Mucosa of descending colon (tissue), 3 donors: ENCODE measurements at regions of chr11 and their contacts with region 1.

Region 1: GRCh38 chr11:62444236-62444833 is 25.5 kb downstream of the SCGB1A1 start:
- DNase-seq: peak; percentile 47 to 71 (median 71)
- ATAC-seq: peak; percentile 33
- H3K4me3 ChIP-seq: no peak overlapping the region
- H3K4me1 ChIP-seq: peaks cover 23% of the 10 kb centered on the region
- CTCF ChIP-seq: no peak

Region 2: DNA sequence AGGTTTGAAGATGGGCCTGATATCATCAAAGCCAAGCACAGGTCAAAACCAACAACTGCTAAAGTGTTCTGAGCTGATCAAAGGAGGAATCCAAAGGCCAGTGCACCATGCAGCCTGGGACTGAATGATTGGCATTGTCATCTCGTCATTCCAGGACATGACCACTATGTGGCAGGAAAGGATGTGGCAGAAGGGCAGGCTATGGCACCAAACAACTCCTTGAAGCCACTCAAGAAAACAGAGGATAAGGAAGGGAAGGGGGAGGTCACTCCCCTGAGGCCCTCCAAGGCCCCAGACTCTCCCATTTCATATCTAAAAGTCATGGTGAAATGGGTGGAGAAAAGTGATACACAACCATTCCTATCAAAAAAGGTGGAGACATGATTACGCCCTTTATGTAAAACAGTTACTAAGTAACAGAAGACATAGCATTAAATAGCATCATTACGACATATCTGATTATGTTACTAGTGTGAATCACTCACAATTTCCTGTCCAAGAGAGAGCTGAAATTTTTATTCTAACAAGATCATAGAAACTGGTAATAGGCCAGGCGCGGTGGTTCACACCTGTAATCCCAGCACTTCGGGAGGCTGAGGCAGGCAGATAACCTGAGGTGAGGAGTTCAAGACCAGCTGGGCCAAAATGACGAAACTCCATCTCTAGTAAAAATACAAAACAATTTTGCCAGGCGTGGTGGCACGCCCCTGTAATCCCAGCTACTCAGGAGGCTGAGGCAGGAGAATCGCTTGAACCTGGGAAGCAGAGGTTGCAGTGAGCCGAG is 53.0 kb after region 1 on chr11:
- intact Hi-C with region 1: no loop called
- DNase-seq: peak in 2 of 3 donors; percentile 42 to 64
- ATAC-seq: peak; percentile 73
- H3K4me3 ChIP-seq: no peak overlapping the region
- H3K4me1 ChIP-seq: peaks cover 17% of the 10 kb centered on the region
- CTCF ChIP-seq: no peak

Region 3: DNA sequence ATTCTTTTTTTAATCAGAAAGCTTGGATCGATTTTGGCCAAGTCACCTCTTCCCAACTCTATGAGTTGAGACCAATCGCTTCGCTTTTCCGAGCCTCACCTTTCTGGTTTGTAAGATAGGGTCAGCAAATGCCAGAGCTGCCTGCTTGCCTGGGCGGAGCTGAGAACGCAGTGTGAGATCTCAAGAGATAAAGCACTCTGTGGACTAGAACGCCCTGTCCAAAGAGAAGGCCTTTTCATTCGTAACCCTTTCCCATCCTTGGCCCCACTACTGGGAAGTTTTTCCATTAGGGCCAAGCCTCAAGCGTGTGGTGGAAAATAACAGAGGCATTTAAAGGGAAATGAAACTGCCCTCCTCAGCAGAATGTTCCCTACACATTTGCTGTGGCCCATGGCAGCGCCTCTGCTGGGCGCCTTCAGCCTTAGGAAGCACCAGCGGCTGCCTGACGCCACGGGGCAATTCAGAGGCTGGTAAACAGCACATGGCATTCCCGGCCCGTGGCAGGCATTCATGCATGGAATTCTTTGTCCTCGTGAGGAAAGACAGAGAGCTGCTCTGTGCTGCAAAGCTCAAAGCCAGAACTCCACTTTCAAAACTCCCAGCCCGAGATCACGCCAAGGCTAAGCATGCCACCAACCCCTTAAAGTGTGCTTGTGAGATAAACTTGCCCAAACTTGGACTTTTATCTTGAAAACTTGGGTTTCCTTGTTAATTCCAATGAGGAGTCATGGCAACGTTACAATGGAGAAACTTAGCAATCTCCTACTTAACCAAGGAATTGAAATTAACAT is 64.1 kb after region 1 on chr11:
- intact Hi-C with region 1: loop called in 1 of 2 experiments (anchors 5 kb)
- DNase-seq: peak; percentile 81 to 85 (median 83)
- ATAC-seq: peak; percentile 78
- H3K4me3 ChIP-seq: no peak overlapping the region
- H3K4me1 ChIP-seq: peaks cover 35% of the 10 kb centered on the region
- CTCF ChIP-seq: no peak

Region 4: GRCh38 chr11:62689421-62690183 is 245.3 kb after region 1 on chr11 and contains the start of gene LRRN4CL:
- intact Hi-C with region 1: no loop called
- DNase-seq: peak in 2 of 3 donors; percentile 57 to 70
- ATAC-seq: peak; percentile 66
- H3K4me3 ChIP-seq: no peak within 1 kb of the TSS
- H3K4me1 ChIP-seq: peaks cover 5% of the 10 kb centered on the region
- CTCF ChIP-seq: no peak
- total RNA-seq, gene LRRN4CL: 1.2 to 11.5 (median 5.6) TPM